Dorsolateral prefrontal cortex (tissue), 120 donors: ENCODE measurements at regions of chr2 and their contacts with region 1.

Region 1: GRCh38 chr2:222860740-222861410 is at the start of gene ACSL3:
- DNase-seq: peak; percentile 94 to 99 (median 98)
- H3K4me3 ChIP-seq: peak within 1 kb of the TSS; percentile 61 to 99 (median 91)
- H3K27ac ChIP-seq: peak within 1 kb of the TSS; percentile 61 to 99 (median 95)
- H3K27me3 ChIP-seq: no peaks in the 10 kb centered on the region
- CTCF ChIP-seq: peak in 40 of 56 donors; percentile 5 to 66 (median 32)
- total RNA-seq, gene ACSL3: 87.5 to 207 (median 154) TPM

Region 2: GRCh38 chr2:222655787-222656525 is 204.9 kb before region 1 on chr2 and contains the start of gene FARSB:
- intact Hi-C with region 1: loop called in 1 of 2 experiments (anchors 5 kb)
- DNase-seq: peak; percentile 92 to 97 (median 95)
- H3K4me3 ChIP-seq: peak within 1 kb of the TSS; percentile 66 to 100 (median 96)
- H3K27ac ChIP-seq: peak within 1 kb of the TSS; percentile 73 to 100 (median 98)
- H3K27me3 ChIP-seq: no peaks in the 10 kb centered on the region
- CTCF ChIP-seq: peak in 17 of 56 donors; percentile 4 to 47 (median 21)
- total RNA-seq, gene FARSB: 13.2 to 41.5 (median 27.8) TPM

Region 3: GRCh38 chr2:222707689-222708525 is 153.0 kb before region 1 on chr2:
- intact Hi-C with region 1: loop called (anchors 2 kb)
- DNase-seq: peak; percentile 64 to 91 (median 84)
- H3K4me3 ChIP-seq: peak overlapping the region in 22 of 59 donors; percentile 6 to 51 (median 27)
- H3K27ac ChIP-seq: peak overlapping the region in 18 of 59 donors; percentile 11 to 86 (median 77)
- H3K27me3 ChIP-seq: no peaks in the 10 kb centered on the region
- CTCF ChIP-seq: peak; percentile 94 to 100 (median 98)

Region 4: DNA sequence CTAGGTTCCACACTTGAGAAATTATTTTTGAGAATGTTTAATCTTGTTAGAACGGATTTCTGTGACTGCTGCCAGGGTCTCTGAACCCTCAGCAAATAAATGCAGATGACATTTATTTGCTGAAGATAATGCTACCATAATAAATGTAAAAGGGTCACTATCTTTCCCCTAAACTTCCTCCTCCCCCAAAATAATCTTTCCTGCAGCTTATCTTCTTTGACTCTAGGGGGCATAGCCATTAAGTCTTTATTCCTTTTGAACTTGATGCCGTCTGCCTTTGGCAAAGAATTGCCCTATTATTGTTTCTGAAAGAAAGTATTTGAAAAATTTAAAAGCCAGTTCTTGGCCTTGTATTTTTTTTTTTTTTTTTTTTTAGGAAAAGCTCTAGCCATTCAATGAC is 63.6 kb before region 1 on chr2:
- intact Hi-C with region 1: loop called (anchors 5 to 10 kb)
- DNase-seq: no peak
- H3K4me3 ChIP-seq: no peak overlapping the region
- H3K27ac ChIP-seq: peak overlapping the region in 54 of 59 donors; percentile 28 to 82 (median 64)
- H3K27me3 ChIP-seq: no peaks in the 10 kb centered on the region
- CTCF ChIP-seq: peak; percentile 10 to 67 (median 49)

Region 5: DNA sequence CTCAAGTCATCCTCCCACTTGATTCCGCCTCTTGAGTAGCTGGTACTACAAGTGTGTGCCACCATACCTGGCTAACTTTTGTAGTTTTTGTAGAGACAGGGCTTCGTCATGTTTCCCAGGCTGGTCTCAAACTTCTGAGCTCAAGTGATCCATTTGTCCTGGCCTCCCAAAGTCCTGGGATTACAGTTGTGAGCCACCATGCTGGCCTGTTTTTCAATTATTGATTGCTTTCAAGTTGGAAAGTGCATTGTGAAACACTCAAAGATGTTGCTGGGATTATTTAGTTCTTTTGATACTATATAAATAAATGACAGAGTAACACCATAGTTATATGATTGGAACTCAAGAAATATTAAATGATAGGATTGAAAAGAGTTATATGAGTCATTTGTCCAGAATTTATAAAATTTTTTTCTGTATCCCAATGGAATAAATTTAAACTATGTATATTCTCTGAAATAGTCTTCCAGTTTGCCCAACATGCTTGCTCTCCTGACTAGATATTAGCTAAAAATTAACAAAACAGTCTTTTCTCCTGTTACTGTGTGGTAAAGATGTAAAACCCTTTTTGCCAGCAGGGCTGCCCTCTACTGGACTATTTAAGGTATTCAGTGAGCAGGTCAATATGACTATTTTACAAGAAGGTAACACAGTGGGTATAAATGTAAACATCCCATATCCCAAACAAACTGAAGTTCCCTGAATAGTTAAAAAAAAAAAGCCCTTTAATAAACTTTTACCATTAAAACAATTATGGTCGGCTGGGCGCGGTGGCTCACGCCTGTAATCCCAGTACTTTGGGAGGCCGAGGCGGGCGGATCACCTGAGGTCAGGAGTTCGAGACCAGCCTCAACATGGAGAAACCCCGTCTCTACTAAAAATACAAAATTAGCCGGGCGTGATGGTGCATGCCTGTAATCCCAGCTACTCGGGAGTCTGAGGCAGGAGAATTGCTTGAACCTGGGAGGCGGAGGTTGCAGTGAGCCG is 42.7 kb after region 1 on chr2:
- intact Hi-C with region 1: loop called (anchors 2 to 5 kb)
- DNase-seq: peak in 1 of 10 donors; percentile 54
- H3K4me3 ChIP-seq: no peak overlapping the region
- H3K27ac ChIP-seq: peak overlapping the region in 29 of 59 donors; percentile 1 to 77 (median 45)
- H3K27me3 ChIP-seq: no peaks in the 10 kb centered on the region
- CTCF ChIP-seq: peak; percentile 46 to 80 (median 66)

Region 6: DNA sequence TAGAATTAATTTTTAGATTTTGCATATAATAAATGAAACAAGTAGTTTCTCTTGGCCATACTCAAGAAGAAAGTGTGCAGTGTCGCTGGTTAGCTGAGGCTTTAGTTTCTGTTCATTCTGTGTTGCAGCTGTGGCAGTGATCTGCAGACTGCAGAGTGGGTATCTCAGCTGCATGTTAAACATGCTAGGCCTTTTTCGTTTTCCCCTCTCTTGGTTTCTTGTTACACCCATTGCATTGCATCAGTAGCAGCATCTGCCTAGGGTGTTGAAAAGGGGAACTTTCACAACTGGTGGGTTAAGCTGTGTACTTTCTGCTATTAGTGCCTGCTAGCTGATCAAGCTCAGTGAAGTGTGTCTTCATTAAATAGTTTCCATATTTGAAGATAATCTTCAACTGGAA is 51.2 kb after region 1 on chr2:
- intact Hi-C with region 1: loop called (anchors 2 to 5 kb)
- DNase-seq: peak in 1 of 10 donors; percentile 23
- H3K4me3 ChIP-seq: peak overlapping the region in 22 of 59 donors; percentile 0 to 36 (median 12)
- H3K27ac ChIP-seq: peak overlapping the region in 53 of 59 donors; percentile 6 to 83 (median 63)
- H3K27me3 ChIP-seq: no peaks in the 10 kb centered on the region
- CTCF ChIP-seq: peak in 3 of 56 donors; percentile 6 to 11 (median 6)